ENCODE measurements at regions of chr14 and their contacts with region 1.

Region 1: GRCh38 chr14:21734457-21735074 is 60.9 kb upstream of the OR4E1 start:
- H3K4me3 ChIP-seq: no peak overlapping the region
- H3K27ac ChIP-seq: no peak overlapping the region
- H3K4me1 ChIP-seq: no peaks in the 10 kb centered on the region
- CTCF ChIP-seq: no peak

Region 2: DNA sequence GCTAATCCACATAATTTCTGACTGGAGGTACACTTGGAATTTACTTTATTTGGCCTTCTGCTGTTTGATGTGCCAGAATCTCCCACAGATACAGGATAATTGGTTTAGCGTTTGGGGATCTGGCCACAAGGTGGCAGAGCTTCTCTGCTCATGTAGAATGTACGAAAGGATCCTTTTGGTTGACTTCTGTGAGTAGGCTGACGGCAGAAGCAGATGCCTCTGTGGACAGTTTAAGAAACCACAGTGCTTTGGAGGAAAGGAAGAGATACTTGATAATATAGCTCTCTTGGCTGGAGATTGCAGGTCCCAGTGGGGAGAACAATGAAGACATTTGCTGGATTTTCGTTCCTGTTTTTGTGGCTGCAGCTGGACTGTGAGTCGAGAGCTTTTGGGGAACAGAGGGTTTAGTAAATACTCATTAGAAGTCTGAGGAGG is 14.3 kb after region 1 on chr14:
- CTCF ChIA-PET with region 1: interaction called, 21 read pairs
- POLR2A ChIA-PET with region 1: no interaction called
- H3K4me3 ChIP-seq: no peak overlapping the region
- H3K27ac ChIP-seq: no peak overlapping the region
- H3K4me1 ChIP-seq: no peaks in the 10 kb centered on the region
- CTCF ChIP-seq: peak; percentile 49

Region 3: DNA sequence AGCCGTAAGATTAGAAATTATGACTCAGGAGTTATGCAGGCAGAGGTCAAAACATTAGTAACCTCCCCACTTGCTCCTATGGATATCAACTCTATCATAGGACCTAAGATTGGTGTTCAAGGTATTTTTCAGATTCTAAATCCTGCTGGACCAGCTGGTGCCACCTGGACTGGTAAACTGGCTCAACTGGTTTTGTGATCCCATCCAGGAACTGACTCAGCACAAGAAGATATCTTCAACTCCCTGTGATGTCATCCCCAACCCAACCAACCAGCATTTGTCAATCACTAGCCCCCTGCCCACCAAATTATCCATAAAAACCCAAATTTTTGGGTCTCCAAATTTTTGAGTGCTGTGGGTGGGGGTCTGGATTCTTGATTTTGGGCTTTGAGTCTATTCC is 37.1 kb after region 1 on chr14:
- CTCF ChIA-PET with region 1: interaction called, 10 read pairs
- POLR2A ChIA-PET with region 1: no interaction called
- H3K4me3 ChIP-seq: no peak overlapping the region
- H3K27ac ChIP-seq: no peak overlapping the region
- H3K4me1 ChIP-seq: no peaks in the 10 kb centered on the region
- CTCF ChIP-seq: no peak